Kidney (tissue), 22 donors: ENCODE measurements at regions of chr10 and their contacts with region 1.

Region 1: DNA sequence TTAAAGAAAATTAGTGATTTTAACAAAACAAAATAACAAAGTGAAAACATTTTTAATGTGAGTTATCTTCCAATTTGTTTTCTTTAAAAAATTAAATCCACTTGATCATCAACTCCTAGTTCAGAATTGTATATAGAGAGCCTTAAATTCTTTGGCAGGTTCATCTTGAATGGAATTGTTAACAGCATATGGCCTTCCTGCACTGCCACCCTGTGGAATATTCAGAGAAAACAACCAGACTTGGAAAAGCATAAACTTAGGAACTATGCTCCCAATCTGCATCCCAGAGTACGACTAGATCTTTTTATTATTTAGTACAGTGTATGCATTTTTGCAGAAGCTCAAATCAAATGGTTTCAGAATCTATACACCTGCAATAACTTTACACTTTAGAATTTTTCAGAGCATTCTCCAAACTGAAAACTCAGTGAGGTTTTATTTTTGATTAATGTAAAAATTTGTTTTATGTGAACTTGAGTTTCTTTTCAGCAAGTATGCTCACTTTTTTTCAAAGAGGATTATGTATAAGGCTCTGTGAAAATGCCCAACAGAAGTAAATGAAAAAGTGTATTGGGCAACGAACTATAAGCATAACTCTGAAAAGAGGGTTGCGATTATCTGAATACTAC is 44.9 kb upstream of the ANK3 start:
- DNase-seq: peak in 3 of 5 donors; percentile 45 to 79 (median 53)
- H3K4me3 ChIP-seq: no peak overlapping the region
- H3K27ac ChIP-seq: no peak overlapping the region
- H3K4me1 ChIP-seq: no peaks in the 10 kb centered on the region
- H3K27me3 ChIP-seq: no peaks in the 10 kb centered on the region
- CTCF ChIP-seq: peak; percentile 85

Region 2: DNA sequence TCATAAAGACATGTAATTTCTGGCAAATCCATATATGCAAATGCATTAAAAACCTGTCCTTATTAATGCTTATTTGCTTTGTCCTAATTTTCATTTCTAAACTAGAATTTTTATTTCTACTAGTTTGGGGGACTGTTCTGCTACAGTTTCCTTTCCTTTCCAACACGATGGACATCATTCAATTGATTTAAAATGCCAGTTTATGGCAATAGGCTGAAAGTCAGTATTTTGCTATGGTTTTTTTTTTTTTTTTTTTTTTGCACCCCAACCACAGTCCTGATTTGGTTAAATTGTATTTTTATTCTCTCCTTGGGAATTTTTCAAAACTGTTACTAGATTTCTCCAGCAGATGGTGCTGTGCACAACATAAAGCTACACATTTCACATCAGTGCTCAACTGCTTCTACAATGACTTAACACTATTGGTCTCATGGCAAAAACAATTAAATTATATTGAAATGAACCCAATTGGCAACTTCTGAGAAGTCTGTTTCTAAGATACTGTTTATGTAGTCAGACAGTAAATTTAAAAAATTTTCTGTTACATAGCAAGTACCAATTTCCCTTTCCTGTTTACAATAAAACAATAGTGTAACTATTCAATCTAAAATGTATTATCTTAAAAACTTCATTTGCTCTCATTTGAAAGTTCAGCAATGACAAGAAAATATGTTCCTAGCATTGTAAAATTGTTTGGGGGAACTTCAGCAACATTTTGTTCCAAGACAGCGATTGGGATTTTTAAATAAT is 334.4 kb before region 1 on chr10:
- intact Hi-C with region 1: loop called (anchors 10 kb)
- DNase-seq: peak in 2 of 5 donors; percentile 71 to 87
- H3K4me3 ChIP-seq: no peak overlapping the region
- H3K27ac ChIP-seq: no peak overlapping the region
- H3K4me1 ChIP-seq: peaks cover 0 to 11% (median 3%) of the 10 kb centered on the region in 3 donors
- H3K27me3 ChIP-seq: no peaks in the 10 kb centered on the region
- CTCF ChIP-seq: peak; percentile 56